A673 (cell line): ENCODE measurements at regions of chr6 and their contacts with region 1.

Region 1: GRCh38 chr6:97068211-97068610 is 143.7 kb downstream of the KLHL32 start:
- DNase-seq: peak; percentile 65
- H3K4me3 ChIP-seq: no peak overlapping the region
- H3K27ac ChIP-seq: no peak overlapping the region
- H3K4me1 ChIP-seq: peaks cover 10% of the 10 kb centered on the region
- H3K27me3 ChIP-seq: no peaks in the 10 kb centered on the region
- CTCF ChIP-seq: peak; percentile 71

Region 2: DNA sequence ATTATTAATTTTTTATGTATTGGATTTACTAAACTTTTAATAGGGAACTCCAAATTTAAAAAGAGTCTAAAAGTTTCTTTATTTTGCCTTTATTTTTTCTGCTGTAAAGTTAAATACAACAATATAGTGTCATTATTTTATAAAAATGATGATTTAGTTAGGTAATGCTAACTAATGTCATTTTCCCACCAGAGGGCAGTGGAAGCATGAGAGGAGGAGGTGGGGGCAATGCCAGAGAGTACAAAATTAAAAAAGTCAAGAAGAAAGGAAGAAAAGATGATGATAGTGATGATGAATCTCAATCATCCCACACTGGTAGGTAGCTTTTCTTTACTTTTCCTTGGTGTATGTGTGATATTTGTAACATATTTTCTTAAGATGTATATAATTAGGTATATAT is 525.5 kb before region 1 on chr6:
- CTCF ChIA-PET with region 1: no interaction called
- POLR2A ChIA-PET with region 1: no interaction called
- intact Hi-C with region 1: loop called (anchors 5 kb)
- DNase-seq: peak; percentile 39
- H3K4me3 ChIP-seq: no peak overlapping the region
- H3K27ac ChIP-seq: no peak overlapping the region
- H3K4me1 ChIP-seq: no peaks in the 10 kb centered on the region
- H3K27me3 ChIP-seq: no peaks in the 10 kb centered on the region
- CTCF ChIP-seq: peak; percentile 60

Region 3: GRCh38 chr6:97394160-97394748 is 326.0 kb after region 1 on chr6:
- CTCF ChIA-PET with region 1: no interaction called
- POLR2A ChIA-PET with region 1: no interaction called
- intact Hi-C with region 1: loop called (anchors 1 kb)
- DNase-seq: peak; percentile 81
- H3K4me3 ChIP-seq: no peak overlapping the region
- H3K27ac ChIP-seq: no peak overlapping the region
- H3K4me1 ChIP-seq: no peaks in the 10 kb centered on the region
- H3K27me3 ChIP-seq: no peaks in the 10 kb centered on the region
- CTCF ChIP-seq: peak; percentile 89

Region 4: DNA sequence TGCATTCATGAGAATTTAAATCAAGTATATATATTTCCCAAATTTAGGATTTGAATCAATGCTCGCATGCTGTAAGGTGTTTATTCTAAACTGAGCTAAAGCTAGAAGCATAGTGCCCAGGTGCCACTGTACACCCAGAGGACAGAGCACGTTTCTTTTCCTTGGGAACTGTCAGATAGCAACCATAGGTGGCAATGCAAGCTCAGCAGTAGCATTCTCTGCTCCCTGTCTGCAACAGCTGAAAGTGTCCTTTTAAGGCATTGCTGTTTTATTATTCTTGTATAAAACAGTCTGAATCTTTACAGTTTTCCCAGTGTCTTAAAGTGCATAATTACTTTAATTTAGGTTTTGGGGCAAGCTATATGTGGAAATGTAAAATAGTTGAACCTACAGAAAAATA is 658.2 kb after region 1 on chr6:
- CTCF ChIA-PET with region 1: no interaction called
- POLR2A ChIA-PET with region 1: no interaction called
- intact Hi-C with region 1: no loop called
- DNase-seq: no peak
- H3K4me3 ChIP-seq: no peak overlapping the region
- H3K27ac ChIP-seq: no peak overlapping the region
- H3K4me1 ChIP-seq: peaks cover 11% of the 10 kb centered on the region
- H3K27me3 ChIP-seq: no peaks in the 10 kb centered on the region
- CTCF ChIP-seq: peak; percentile 41

Region 5: GRCh38 chr6:98039869-98040607 is 971.8 kb after region 1 on chr6:
- CTCF ChIA-PET with region 1: no interaction called
- POLR2A ChIA-PET with region 1: no interaction called
- intact Hi-C with region 1: loop called (anchors 10 kb)
- DNase-seq: peak; percentile 63
- H3K4me3 ChIP-seq: no peak overlapping the region
- H3K27ac ChIP-seq: no peak overlapping the region
- H3K4me1 ChIP-seq: peaks cover 9% of the 10 kb centered on the region
- H3K27me3 ChIP-seq: no peaks in the 10 kb centered on the region
- CTCF ChIP-seq: peak; percentile 81